ENCODE measurements at regions of chr6 and their contacts with region 1.

Region 1: GRCh38 chr6:71533939-71534379 is 245.3 kb downstream of the OGFRL1 start:
- DNase-seq: no peak
- H3K4me3 ChIP-seq: no peak overlapping the region
- CTCF ChIP-seq: no peak
- POLR2A ChIP-seq: no peak

Region 2: DNA sequence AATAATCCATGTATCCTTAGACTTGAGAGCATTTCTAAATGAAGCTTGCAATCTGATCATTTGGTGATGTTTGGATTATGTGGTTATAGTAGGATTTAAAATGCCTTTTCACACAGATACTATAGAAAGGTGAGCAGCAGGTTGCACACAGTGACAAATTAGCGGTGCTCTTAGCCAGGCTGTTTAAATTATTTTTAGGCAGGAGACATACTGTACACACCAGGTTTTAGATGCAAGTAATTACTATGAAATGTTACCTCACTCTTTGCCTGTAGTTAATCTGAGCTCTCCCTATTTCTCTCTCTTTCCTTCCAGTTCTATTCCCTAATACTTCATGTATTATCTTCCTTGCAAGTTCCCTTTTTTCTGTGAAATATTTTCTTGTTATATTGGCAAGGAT is 544.1 kb after region 1 on chr6:
- intact Hi-C with region 1: loop called (anchors 10 kb)
- DNase-seq: no peak
- H3K4me3 ChIP-seq: no peak overlapping the region
- CTCF ChIP-seq: no peak
- POLR2A ChIP-seq: no peak

Measured in lower leg skin (tissue), 4 donors.